Calu3 (cell line): ENCODE measurements at regions of chr21 and their contacts with region 1.

Region 1: DNA sequence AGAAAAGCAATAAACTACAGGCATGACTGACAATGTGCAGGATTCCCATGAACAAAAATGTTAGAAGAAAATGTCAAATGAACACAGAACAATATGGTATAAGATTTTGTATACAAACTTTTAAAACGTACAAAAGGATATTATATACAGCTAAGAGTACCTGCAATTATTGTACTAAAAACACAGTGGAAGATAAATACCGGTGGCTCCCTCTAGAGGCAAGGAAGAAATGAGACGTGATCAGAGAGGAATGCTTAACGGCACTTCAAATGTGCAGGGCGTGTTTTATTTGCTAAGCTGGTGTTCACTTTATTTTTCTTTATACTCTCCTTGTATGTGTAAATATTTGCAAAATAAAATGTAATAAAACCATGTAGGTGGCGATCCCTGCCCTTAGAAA is 191.8 kb upstream of the SAMSN1 start:
- DNase-seq: peak; percentile 48
- H3K4me3 Mint-ChIP-seq: no peak overlapping the region
- H3K27ac Mint-ChIP-seq: no peak overlapping the region
- H3K4me1 Mint-ChIP-seq: peaks cover 17% of the 10 kb centered on the region
- H3K27me3 Mint-ChIP-seq: no peaks in the 10 kb centered on the region
- CTCF ChIP-seq: peak; percentile 27

Region 2: GRCh38 chr21:14120091-14120734 is 617.7 kb before region 1 on chr21:
- CTCF ChIA-PET with region 1: no interaction called
- intact Hi-C with region 1: no loop called
- DNase-seq: no peak
- H3K4me3 Mint-ChIP-seq: no peak overlapping the region
- H3K27ac Mint-ChIP-seq: no peak overlapping the region
- H3K4me1 Mint-ChIP-seq: no peaks in the 10 kb centered on the region
- H3K27me3 Mint-ChIP-seq: no peaks in the 10 kb centered on the region
- CTCF ChIP-seq: no peak

Region 3: DNA sequence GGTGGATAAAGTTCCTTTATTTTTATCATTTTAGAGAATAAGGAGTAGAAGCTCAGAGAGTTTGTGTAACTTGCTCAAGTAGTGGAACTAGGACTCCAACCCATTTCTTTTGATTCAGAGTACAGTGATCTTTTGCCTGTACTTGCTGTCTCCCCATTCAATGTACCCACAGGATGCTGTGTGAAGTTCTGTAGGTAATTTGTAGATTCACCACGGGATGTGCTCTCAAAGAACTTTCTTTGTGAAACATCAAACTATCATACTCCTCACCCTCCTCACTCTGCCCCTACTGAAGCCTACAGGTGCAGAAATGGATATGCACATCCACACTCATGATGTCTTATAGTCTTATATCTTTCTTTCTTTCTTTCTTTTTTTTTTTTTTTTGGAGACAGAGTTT is 289.1 kb before region 1 on chr21:
- CTCF ChIA-PET with region 1: no interaction called
- intact Hi-C with region 1: loop called (anchors 10 kb)
- DNase-seq: no peak
- H3K4me3 Mint-ChIP-seq: no peak overlapping the region
- H3K27ac Mint-ChIP-seq: no peak overlapping the region
- H3K4me1 Mint-ChIP-seq: no peaks in the 10 kb centered on the region
- H3K27me3 Mint-ChIP-seq: no peaks in the 10 kb centered on the region
- CTCF ChIP-seq: no peak